Ascending aorta (tissue), 2 donors: ENCODE measurements at regions of chr9 and their contacts with region 1.

Region 1: DNA sequence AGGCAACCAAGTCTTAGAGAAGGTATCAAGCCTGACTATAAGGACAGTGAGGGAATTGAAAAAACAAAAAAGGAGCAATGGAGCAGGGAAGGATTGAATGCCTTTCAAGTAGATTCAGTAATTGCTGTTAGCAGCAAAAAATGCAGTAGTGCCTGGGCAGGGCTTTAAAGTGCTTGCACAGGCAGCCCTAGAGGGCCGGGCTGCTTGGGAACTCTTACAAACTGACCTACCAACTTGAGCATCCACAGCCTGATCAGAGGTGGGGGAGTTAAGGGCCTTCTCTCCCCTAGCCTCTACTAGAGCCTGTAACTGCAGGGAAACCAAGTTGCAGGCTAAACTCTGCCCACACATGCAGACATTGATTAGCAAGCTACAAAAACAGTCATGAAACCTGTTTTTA is 19.4 kb downstream of the FXN start:
- DNase-seq: no peak
- H3K4me3 ChIP-seq: no peak overlapping the region
- H3K27ac ChIP-seq: no peak overlapping the region
- H3K4me1 ChIP-seq: peaks cover 4% of the 10 kb centered on the region in 2 donors
- H3K27me3 ChIP-seq: no peaks in the 10 kb centered on the region
- CTCF ChIP-seq: no peak

Region 2: GRCh38 chr9:69149321-69149807 is 94.4 kb after region 1 on chr9:
- intact Hi-C with region 1: loop called (anchors 5 kb)
- DNase-seq: no peak
- H3K4me3 ChIP-seq: peak overlapping the region; percentile 14 to 33
- H3K27ac ChIP-seq: peak overlapping the region; percentile 63 to 65
- H3K4me1 ChIP-seq: peaks cover 3 to 13% of the 10 kb centered on the region in 2 donors
- H3K27me3 ChIP-seq: no peaks in the 10 kb centered on the region
- CTCF ChIP-seq: peak; percentile 25 to 64 (median 44)

Region 3: GRCh38 chr9:69193685-69194032 is 138.7 kb after region 1 on chr9:
- intact Hi-C with region 1: loop called (anchors 1 kb)
- DNase-seq: no peak
- H3K4me3 ChIP-seq: no peak overlapping the region
- H3K27ac ChIP-seq: no peak overlapping the region
- H3K4me1 ChIP-seq: peaks cover 3 to 13% of the 10 kb centered on the region in 2 donors
- H3K27me3 ChIP-seq: no peaks in the 10 kb centered on the region
- CTCF ChIP-seq: no peak